Esophagus squamous epithelium (tissue), 5 donors: ENCODE measurements at regions of chr16 and their contacts with region 1.

Region 1: GRCh38 chr16:17083628-17084027 is 387.1 kb downstream of the XYLT1 start:
- DNase-seq: no peak
- H3K4me3 ChIP-seq: no peak overlapping the region
- H3K27ac ChIP-seq: no peak overlapping the region
- H3K4me1 ChIP-seq: no peaks in the 10 kb centered on the region
- H3K27me3 ChIP-seq: no peaks in the 10 kb centered on the region
- CTCF ChIP-seq: no peak
- POLR2A ChIP-seq: no peak

Region 2: DNA sequence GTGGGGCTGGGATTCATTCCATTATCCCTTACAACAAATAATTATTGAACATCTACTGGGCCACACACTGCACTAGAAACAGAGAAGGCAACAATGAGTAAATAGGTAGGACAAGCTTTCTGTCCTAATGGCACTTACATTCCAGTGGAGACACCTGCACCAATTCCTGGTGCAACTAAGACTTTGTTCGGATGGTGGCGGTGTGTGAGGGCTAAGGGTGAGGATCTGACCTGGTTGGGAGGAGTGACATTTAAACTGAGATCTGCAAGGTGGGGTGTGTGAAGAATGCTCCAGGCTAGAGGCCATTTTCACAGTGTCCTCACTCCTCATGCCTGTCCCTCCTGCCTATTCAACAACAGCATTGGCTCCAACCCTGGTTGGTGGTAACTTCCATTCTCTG is 122.8 kb before region 1 on chr16:
- intact Hi-C with region 1: no loop called
- DNase-seq: no peak
- H3K4me3 ChIP-seq: no peak overlapping the region
- H3K27ac ChIP-seq: no peak overlapping the region
- H3K4me1 ChIP-seq: no peaks in the 10 kb centered on the region
- H3K27me3 ChIP-seq: no peaks in the 10 kb centered on the region
- CTCF ChIP-seq: no peak
- POLR2A ChIP-seq: no peak

Region 3: GRCh38 chr16:17134586-17134985 is 51.0 kb after region 1 on chr16:
- intact Hi-C with region 1: loop called (anchors 10 kb)
- DNase-seq: no peak
- H3K4me3 ChIP-seq: no peak overlapping the region
- H3K27ac ChIP-seq: no peak overlapping the region
- H3K4me1 ChIP-seq: no peaks in the 10 kb centered on the region
- H3K27me3 ChIP-seq: no peaks in the 10 kb centered on the region
- CTCF ChIP-seq: no peak
- POLR2A ChIP-seq: no peak